ENCODE measurements at regions of chr15 and their contacts with region 1.

Region 1: GRCh38 chr15:72237286-72238224 is 6.6 kb upstream of the PKM start:
- DNase-seq: peak; percentile 93
- H3K4me3 ChIP-seq: peak overlapping the region; percentile 61
- H3K27ac ChIP-seq: peak overlapping the region; percentile 99
- H3K27me3 ChIP-seq: no peaks in the 10 kb centered on the region
- CTCF ChIP-seq: no peak

Region 2: DNA sequence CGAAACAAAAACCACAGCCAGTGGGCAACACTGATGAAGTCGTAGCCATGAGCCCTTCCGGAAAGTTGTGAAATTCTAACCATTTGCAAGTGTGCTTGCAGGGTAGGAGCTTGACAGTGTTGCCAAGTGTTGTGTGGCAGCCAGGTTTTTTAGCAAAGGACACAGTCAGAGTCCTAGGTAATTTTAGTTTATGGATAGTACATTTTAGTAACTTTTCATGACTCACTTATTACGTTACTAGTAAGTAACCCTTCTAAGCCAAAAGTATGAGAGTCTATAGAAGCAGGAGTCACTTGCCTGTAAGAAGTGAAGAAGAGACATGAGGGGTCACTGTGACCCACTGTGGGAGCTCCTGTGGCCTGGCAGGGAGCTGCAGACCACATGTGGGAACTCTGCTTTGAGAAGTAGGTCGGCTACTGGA is 600.8 kb after region 1 on chr15:
- CTCF ChIA-PET with region 1: no interaction called
- POLR2A ChIA-PET with region 1: interaction called, 10 read pairs
- DNase-seq: no peak
- H3K4me3 ChIP-seq: no peak overlapping the region
- H3K27ac ChIP-seq: no peak overlapping the region
- H3K27me3 ChIP-seq: peaks cover 7% of the 10 kb centered on the region
- CTCF ChIP-seq: no peak